Stomach (tissue), 19 donors: ENCODE measurements at regions of chr12 and their contacts with region 1.

Region 1: GRCh38 chr12:132887513-132888351 is at the start of gene CHFR:
- DNase-seq: peak; percentile 97 to 99
- H3K4me3 ChIP-seq: peak within 1 kb of the TSS; percentile 85 to 98 (median 94)
- H3K27ac ChIP-seq: peak within 1 kb of the TSS; percentile 93 to 98 (median 97)
- H3K4me1 ChIP-seq: peaks cover 0 to 25% (median 14%) of the 10 kb centered on the region in 4 donors
- H3K27me3 ChIP-seq: no peaks in the 10 kb centered on the region
- CTCF ChIP-seq: no peak
- EP300 ChIP-seq: no peak
- POLR2A ChIP-seq: no peak
- total RNA-seq, gene CHFR: 48.7 to 107 (median 73.3) TPM

Region 2: DNA sequence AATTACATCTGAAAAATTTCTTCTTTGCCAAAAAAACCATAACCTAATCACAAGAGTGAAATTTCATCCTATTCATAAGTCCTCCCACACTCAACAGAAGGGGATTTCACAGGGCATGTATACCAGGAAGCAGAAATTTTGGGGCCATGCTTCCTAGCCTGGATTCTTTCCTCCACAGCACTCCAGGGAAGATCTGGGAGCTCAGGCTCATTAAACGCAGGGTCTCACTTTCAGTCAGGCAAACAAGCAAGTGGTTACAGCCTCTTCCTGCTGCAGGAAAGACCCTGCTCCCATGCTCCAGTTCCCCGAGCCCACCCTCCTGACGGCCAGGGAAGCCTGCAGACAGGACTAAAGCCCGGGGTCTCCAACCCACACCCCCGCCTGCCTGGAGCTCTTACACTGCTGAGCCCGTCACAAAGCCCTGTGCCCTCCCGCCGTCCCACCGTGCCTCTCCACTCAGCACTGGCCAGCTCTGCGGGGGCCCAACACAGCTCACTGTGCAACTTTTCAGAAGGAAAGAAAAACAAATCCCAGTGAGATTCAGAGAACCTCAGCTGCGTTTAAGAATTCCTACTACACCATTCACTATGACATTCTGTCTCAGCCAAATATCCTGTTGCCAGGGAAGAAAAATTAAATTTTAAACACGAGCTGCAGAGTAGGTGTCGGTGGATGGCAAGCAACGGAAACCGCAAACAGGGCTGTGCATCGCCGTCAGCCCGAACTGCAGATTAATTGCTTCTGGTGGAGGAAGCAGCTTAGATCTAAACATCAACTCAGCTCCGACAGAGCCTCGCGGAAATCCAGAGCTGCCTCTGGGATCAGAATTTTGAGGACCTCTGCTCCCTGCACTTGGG is 1283.6 kb before region 1 on chr12:
- intact Hi-C with region 1: no loop called
- DNase-seq: peak in 1 of 2 donors; percentile 51
- H3K4me3 ChIP-seq: no peak overlapping the region
- H3K27ac ChIP-seq: no peak overlapping the region
- H3K4me1 ChIP-seq: peaks cover 0 to 14% (median 0%) of the 10 kb centered on the region in 4 donors
- H3K27me3 ChIP-seq: peaks cover 0 to 56% (median 5%) of the 10 kb centered on the region in 3 donors
- CTCF ChIP-seq: no peak
- EP300 ChIP-seq: no peak
- POLR2A ChIP-seq: no peak

Region 3: GRCh38 chr12:132672017-132672515 is 215.7 kb before region 1 on chr12:
- intact Hi-C with region 1: no loop called
- DNase-seq: no peak
- H3K4me3 ChIP-seq: no peak overlapping the region
- H3K27ac ChIP-seq: no peak overlapping the region
- H3K4me1 ChIP-seq: no peaks in the 10 kb centered on the region
- H3K27me3 ChIP-seq: no peaks in the 10 kb centered on the region
- CTCF ChIP-seq: no peak
- EP300 ChIP-seq: no peak
- POLR2A ChIP-seq: no peak

Region 4: DNA sequence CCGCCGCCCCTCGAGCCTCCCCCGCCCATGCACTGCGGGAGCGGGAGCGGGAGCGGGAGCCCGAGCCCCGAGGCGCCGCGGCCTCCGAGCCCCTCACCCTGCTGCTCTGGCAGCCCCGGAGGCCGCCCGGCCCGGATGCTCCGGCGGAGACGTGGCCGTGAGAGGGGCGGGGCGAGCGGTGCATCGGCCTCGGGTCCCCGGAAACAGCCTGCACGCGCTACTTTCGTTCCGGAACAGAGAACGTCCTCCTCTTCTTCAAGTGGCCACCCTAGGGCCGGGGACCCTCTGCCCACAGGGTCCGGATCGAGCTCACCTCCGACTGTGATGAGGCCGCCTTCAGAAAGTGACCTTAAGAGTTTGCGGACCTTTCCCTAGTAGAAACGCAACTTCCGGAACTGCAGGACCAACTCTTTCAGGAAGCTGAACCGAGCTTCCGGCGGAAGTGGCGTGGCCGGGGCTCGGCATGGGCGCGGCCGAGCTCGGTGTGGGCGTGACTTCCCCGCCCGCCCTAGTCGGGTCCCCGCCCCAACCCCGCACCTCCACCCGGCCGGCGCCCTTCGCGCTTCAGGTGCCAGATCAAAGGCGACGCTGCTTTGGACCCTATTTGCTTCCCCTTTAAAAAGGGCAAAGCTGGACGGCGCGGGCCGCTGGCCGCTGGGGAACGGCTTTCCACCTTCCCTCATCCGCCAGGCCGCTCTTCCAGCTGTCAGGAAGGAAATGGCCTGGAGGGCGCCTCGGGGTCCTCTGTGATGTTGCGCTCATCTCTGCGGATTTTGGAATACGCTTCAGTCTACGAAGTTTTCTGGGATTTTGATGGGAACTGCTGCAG is 58.8 kb before region 1 on chr12 and contains the start of gene GOLGA3:
- intact Hi-C with region 1: loop called (anchors 10 kb)
- DNase-seq: peak; percentile 96 to 98
- H3K4me3 ChIP-seq: peak within 1 kb of the TSS; percentile 78 to 95 (median 86)
- H3K27ac ChIP-seq: peak within 1 kb of the TSS; percentile 91 to 100 (median 97)
- H3K4me1 ChIP-seq: peaks cover 16 to 49% (median 37%) of the 10 kb centered on the region in 4 donors
- H3K27me3 ChIP-seq: no peaks in the 10 kb centered on the region
- CTCF ChIP-seq: no peak
- EP300 ChIP-seq: peak; percentile 21
- POLR2A ChIP-seq: no peak
- total RNA-seq, gene GOLGA3: 53.7 to 204 (median 75.5) TPM